Activated CD4-positive, alpha-beta T cell treated with anti-CD3 and anti-CD28 coated beads for 36 hours (primary cell): ENCODE measurements at regions of chr4 and their contacts with region 1.

Region 1: GRCh38 chr4:98625399-98625798 is 33.0 kb downstream of the TSPAN5 start:
- DNase-seq: no peak
- ATAC-seq: no peak
- H3K4me3 Mint-ChIP-seq: no peak overlapping the region
- H3K27ac Mint-ChIP-seq: no peak overlapping the region
- H3K4me1 Mint-ChIP-seq: peaks cover 55% of the 10 kb centered on the region
- H3K27me3 Mint-ChIP-seq: no peaks in the 10 kb centered on the region

Region 2: GRCh38 chr4:98609934-98610333 is 15.5 kb before region 1 on chr4:
- CTCF ChIA-PET with region 1: no interaction called
- POLR2A ChIA-PET with region 1: no interaction called
- intact Hi-C with region 1: loop called in 1 of 2 experiments (anchors 2 kb)
- DNase-seq: no peak
- ATAC-seq: peak; percentile 53
- H3K4me3 Mint-ChIP-seq: no peak overlapping the region
- H3K27ac Mint-ChIP-seq: no peak overlapping the region
- H3K4me1 Mint-ChIP-seq: peaks cover 57% of the 10 kb centered on the region
- H3K27me3 Mint-ChIP-seq: no peaks in the 10 kb centered on the region